Ascending aorta (tissue), 2 donors: ENCODE measurements at regions of chr9 and their contacts with region 1.

Region 1: DNA sequence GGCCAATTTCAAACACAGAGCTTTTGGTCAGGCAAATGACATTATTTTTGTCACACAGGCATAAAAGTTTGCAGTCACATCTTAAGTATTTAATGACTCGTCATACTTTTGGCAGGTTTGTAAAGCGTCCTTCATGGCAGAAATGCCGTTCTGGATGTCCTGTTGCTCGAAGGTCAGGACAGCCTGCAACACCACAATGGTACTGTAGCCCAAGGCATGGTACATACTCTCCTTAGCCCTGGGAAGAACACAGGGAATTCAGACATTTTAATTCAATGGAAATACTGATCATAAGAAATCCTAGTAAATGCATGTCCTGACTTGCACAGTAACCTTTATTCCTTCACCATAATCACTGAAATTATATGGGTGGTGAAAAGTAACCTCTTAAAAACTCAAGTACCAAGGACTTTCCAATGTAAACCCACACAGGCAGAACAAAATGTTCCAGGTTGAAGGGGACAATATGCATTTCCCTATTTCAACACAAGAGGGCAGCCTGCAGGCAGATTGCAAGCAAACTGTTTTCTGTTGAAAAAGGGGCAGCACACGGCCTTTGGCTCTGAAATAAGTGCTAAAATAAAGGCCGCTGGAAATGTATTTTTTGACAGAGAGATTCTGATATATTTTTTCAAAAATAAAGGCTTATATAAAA is 95.7 kb downstream of the TTC39B start:
- DNase-seq: peak in 1 of 2 donors; percentile 81
- H3K4me3 ChIP-seq: peak overlapping the region in 1 of 2 donors; percentile 39
- H3K27ac ChIP-seq: peak overlapping the region; percentile 74 to 79
- H3K4me1 ChIP-seq: peaks cover 0 to 21% of the 10 kb centered on the region in 2 donors
- H3K27me3 ChIP-seq: no peaks in the 10 kb centered on the region
- CTCF ChIP-seq: peak; percentile 73 to 92 (median 89)

Region 2: DNA sequence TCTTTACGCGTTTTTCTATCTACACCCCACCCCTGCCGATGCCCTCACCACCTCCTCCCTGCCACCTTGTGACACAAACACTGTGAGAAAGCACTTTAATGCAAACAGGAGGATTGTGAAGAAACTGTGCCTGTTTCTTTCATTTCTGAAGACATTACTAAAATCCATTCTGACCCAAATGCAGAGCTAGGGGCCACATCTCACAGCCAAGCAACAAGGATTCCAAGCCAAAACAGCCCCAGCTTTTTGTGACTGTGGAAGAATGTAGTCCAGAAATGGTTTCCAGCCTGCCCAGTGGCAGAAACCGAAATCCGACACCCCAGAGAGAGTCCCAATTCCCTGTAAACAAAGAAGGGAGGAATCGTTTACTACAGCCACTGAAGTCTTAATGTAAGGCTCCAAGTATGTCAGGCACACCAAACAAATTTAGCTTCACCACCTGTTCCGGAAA is 95.1 kb before region 1 on chr9:
- intact Hi-C with region 1: loop called (anchors 10 kb)
- DNase-seq: no peak
- H3K4me3 ChIP-seq: peak overlapping the region in 1 of 2 donors; percentile 18
- H3K27ac ChIP-seq: no peak overlapping the region
- H3K4me1 ChIP-seq: no peaks in the 10 kb centered on the region
- H3K27me3 ChIP-seq: no peaks in the 10 kb centered on the region
- CTCF ChIP-seq: no peak

Region 3: GRCh38 chr9:15249042-15249818 is 37.9 kb after region 1 on chr9:
- intact Hi-C with region 1: loop called (anchors 2 kb)
- DNase-seq: no peak
- H3K4me3 ChIP-seq: peak overlapping the region in 1 of 2 donors; percentile 45
- H3K27ac ChIP-seq: peak overlapping the region; percentile 70 to 80
- H3K4me1 ChIP-seq: peaks cover 4 to 26% of the 10 kb centered on the region in 2 donors
- H3K27me3 ChIP-seq: no peaks in the 10 kb centered on the region
- CTCF ChIP-seq: no peak

Region 4: DNA sequence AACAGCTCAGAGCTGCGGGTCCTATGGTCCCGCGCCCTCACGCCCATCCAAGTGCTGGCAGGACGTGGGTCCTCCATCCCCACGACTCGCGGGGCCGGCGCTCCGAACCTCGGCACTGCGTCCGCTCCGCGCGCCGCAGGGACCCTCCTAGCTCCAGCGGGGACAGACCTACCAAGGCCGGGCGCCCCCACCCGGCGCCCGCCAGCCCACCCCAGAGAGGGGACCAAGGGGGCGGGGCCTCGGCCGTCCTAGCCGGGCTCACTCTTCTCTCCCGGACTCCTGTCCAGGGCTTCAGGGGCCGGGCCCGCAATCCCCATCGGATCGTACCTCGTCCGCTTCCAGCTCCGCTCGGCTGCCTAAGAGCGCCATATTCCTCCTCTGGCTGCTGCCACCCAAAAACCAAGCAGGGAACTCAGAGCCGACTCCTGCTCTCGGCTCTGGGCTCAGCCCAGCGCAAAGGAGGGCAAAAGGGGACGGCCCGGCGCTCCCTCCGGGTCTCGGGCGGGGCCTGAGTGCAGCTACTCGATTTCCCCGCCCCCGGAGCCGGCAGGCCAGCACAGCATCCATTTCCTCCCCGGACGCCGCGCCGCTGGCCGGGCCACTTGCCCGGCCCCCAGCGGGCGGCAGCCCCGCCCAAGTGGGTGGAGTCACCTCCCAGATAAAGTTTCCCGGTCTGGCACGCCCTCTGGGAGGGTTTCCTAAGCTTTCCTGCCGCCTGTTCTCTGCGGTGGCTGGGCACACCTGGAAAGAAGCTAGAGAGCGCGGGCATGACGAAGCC is 95.7 kb after region 1 on chr9 and contains the start of gene TTC39B:
- intact Hi-C with region 1: loop called (anchors 1 kb)
- DNase-seq: peak; percentile 71 to 97
- H3K4me3 ChIP-seq: peak within 1 kb of the TSS; percentile 82 to 97
- H3K27ac ChIP-seq: peak within 1 kb of the TSS; percentile 89 to 91
- H3K4me1 ChIP-seq: peaks cover 3 to 4% of the 10 kb centered on the region in 2 donors
- H3K27me3 ChIP-seq: no peaks in the 10 kb centered on the region
- CTCF ChIP-seq: peak in 1 of 3 experiments; percentile 2
- total RNA-seq, gene TTC39B: 2.7 TPM

Region 5: GRCh38 chr9:15552636-15553527 is 341.6 kb after region 1 on chr9 and contains the start of gene CCDC171:
- intact Hi-C with region 1: loop called (anchors 5 kb)
- DNase-seq: peak; percentile 72 to 95
- H3K4me3 ChIP-seq: peak within 1 kb of the TSS; percentile 74 to 75
- H3K27ac ChIP-seq: peak within 1 kb of the TSS; percentile 78 to 84
- H3K4me1 ChIP-seq: peaks cover 0 to 5% of the 10 kb centered on the region in 2 donors
- H3K27me3 ChIP-seq: no peaks in the 10 kb centered on the region
- CTCF ChIP-seq: peak in 1 of 3 experiments; percentile 7
- total RNA-seq, gene CCDC171: 1.7 TPM